ENCODE measurements at regions of chr7 and their contacts with region 1.

Region 1: GRCh38 chr7:150448789-150449147 is 1.7 kb upstream of the GIMAP8 start:
- DNase-seq: peak; percentile 23
- ATAC-seq: peak; percentile 92
- H3K4me3 ChIP-seq: no peak overlapping the region
- H3K27ac ChIP-seq: no peak overlapping the region
- H3K4me1 ChIP-seq: no peaks in the 10 kb centered on the region
- H3K27me3 ChIP-seq: peaks cover 4 to 63% of the 10 kb centered on the region in 2 experiments; a peak in 4 of 5 replicates
- CTCF ChIP-seq: peak; percentile 90
- EP300 ChIP-seq: no peak
- POLR2A ChIP-seq: no peak
- RAD21 ChIP-seq: peak; percentile 69

Region 2: DNA sequence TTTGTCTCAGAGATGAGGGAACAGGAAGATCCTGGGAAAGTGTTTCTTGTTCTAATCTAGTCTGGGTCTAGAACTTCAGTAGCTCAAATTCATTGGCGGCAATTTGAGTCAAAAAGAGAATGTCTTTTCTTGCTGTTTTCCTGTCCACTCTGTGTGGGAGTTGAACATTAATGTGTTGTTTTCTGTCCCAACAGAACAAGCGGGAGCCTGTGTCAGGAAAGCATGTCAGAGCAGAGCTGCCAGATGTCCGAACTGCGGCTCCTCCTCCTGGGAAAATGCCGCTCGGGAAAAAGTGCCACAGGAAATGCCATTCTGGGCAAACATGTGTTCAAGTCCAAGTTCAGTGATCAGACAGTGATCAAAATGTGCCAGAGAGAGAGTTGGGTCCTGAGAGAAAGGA is 17.7 kb after region 1 on chr7:
- CTCF ChIA-PET with region 1: no interaction called
- POLR2A ChIA-PET with region 1: no interaction called
- in situ Hi-C with region 1: no loop called
- intact Hi-C with region 1: no loop called
- DNase-seq: no peak
- ATAC-seq: no peak
- H3K4me3 ChIP-seq: no peak overlapping the region
- H3K27ac ChIP-seq: no peak overlapping the region
- H3K4me1 ChIP-seq: no peaks in the 10 kb centered on the region
- H3K27me3 ChIP-seq: peaks cover 0 to 20% of the 10 kb centered on the region in 2 experiments; a peak in 3 of 5 replicates
- CTCF ChIP-seq: no peak
- EP300 ChIP-seq: no peak
- POLR2A ChIP-seq: no peak
- RAD21 ChIP-seq: no peak

Region 3: GRCh38 chr7:150753826-150754603 is 305.2 kb after region 1 on chr7:
- CTCF ChIA-PET with region 1: interaction called, 9 read pairs
- POLR2A ChIA-PET with region 1: no interaction called
- in situ Hi-C with region 1: loop called (anchors 5 kb)
- intact Hi-C with region 1: loop called (anchors 1 kb)
- DNase-seq: peak; percentile 16
- ATAC-seq: peak; percentile 70
- H3K4me3 ChIP-seq: no peak overlapping the region
- H3K27ac ChIP-seq: no peak overlapping the region
- H3K4me1 ChIP-seq: no peaks in the 10 kb centered on the region
- H3K27me3 ChIP-seq: no peaks in the 10 kb centered on the region; a peak in 1 of 5 replicates
- CTCF ChIP-seq: peak; percentile 50
- EP300 ChIP-seq: no peak
- POLR2A ChIP-seq: no peak
- RAD21 ChIP-seq: no peak

Measured in HepG2 (cell line).